Activated CD8-positive, alpha-beta memory T cell treated with anti-CD3 and anti-CD28 coated beads, Interleukin-2, amount 10 ng/mL, durations not matched to agents 7 days and 5 days (primary cell): ENCODE measurements at regions of chr2 and their contacts with region 1.

Region 1: DNA sequence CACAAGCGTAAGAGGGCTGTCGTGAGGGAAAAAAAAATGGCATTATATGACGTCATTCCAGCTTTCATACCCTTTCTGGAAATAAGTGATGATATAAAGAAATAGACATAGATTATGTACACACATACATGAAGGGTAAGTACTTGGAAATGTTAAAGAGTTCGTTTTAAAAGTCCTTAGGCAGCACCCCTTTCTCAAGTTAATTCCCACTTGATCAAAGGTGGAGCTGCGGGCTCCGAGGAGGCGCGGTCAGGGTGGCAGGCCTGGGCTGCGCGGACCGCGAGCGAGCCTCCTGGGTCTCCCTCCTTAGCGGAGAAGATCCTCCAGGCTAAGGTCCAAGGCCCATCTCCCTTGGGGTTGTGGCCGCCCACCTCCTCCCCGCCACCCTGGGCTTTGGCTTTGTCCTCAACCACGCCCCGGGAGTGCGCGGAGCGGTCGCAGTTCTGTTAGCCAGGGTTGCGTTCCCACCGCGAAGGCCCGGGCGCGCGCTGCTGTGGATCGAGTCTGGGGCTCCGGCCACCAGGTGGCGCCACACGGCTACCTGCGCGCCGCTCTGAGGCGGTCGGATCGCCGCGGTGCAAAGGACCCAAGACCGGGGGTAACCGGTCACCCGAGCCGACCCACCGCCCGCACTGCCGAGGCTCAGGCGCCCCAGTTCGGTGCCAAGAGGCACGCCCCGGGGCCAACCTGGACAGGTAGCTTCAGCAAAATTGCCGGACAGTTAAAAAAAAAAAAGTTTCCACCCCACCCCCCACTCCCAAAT is 66.8 kb downstream of the HNRNPLL start:
- DNase-seq: peak; percentile 83
- ATAC-seq: peak; percentile 99
- H3K4me3 Mint-ChIP-seq: peak overlapping the region; percentile 38
- H3K27ac Mint-ChIP-seq: no peak overlapping the region
- H3K4me1 Mint-ChIP-seq: peaks cover 5% of the 10 kb centered on the region
- H3K27me3 Mint-ChIP-seq: peaks cover 16% of the 10 kb centered on the region

Region 2: DNA sequence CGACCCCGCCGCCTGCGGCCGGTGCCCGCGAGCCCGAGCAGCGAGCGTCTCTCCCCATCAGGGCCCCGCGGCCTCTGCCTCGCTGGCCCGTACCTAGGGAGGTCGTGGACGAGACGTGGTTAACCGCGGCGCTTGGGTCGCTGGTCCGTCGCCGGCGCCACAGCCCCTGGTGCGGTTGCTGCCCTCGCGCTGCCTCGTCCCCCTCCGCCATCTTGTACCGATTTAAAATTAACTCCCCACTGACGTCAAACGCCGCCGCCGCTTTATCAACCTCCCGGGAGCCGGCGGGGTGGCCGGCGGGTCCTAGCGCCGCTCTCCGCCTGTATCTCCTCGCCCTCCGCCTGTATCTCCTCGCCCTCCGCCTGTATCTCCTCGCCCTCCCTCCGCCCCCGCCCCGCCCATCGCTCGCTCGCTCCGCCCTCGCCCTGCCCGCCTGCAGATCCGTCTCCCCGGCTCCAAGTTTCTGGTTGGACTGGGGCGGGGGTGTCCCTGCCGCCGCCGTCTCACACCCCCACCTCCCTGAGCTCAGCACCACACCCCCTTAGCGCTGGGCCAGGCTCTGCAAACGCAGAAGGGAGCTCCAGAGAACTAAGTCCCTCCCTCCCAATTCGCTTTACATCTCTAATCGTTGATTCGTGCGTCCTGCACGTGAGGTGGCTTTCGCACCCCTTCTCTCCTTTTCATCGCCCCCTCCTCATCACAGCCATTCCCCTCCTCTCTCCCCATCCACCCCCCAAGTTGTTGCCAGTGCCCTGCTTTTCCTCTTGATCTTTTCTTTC is 158.7 kb before region 1 on chr2 and contains the start of gene ATL2:
- CTCF ChIA-PET with region 1: no interaction called
- DNase-seq: peak; percentile 97
- ATAC-seq: peak; percentile 92
- H3K4me3 Mint-ChIP-seq: peak within 1 kb of the TSS; percentile 87
- H3K27ac Mint-ChIP-seq: peak within 1 kb of the TSS; percentile 85
- H3K4me1 Mint-ChIP-seq: peaks cover 47% of the 10 kb centered on the region
- H3K27me3 Mint-ChIP-seq: peaks cover 6% of the 10 kb centered on the region
- total RNA-seq, gene ATL2: 55.5 to 56.7 TPM

Region 3: GRCh38 chr2:38549071-38549704 is 13.3 kb after region 1 on chr2:
- CTCF ChIA-PET with region 1: interaction called, 25 read pairs
- DNase-seq: no peak
- ATAC-seq: no peak
- H3K4me3 Mint-ChIP-seq: no peak overlapping the region
- H3K27ac Mint-ChIP-seq: no peak overlapping the region
- H3K4me1 Mint-ChIP-seq: peaks cover 8% of the 10 kb centered on the region
- H3K27me3 Mint-ChIP-seq: no peaks in the 10 kb centered on the region

Region 4: GRCh38 chr2:38554973-38555595 is 19.2 kb after region 1 on chr2:
- CTCF ChIA-PET with region 1: interaction called, 25 read pairs
- DNase-seq: no peak
- ATAC-seq: peak; percentile 42
- H3K4me3 Mint-ChIP-seq: no peak overlapping the region
- H3K27ac Mint-ChIP-seq: no peak overlapping the region
- H3K4me1 Mint-ChIP-seq: peaks cover 3% of the 10 kb centered on the region
- H3K27me3 Mint-ChIP-seq: no peaks in the 10 kb centered on the region

Region 5: GRCh38 chr2:38561691-38562090 is 25.8 kb after region 1 on chr2:
- CTCF ChIA-PET with region 1: interaction called, 25 read pairs
- DNase-seq: no peak
- ATAC-seq: no peak
- H3K4me3 Mint-ChIP-seq: no peak overlapping the region
- H3K27ac Mint-ChIP-seq: no peak overlapping the region
- H3K4me1 Mint-ChIP-seq: no peaks in the 10 kb centered on the region
- H3K27me3 Mint-ChIP-seq: no peaks in the 10 kb centered on the region

Region 6: GRCh38 chr2:38581193-38582147 is 45.5 kb after region 1 on chr2:
- CTCF ChIA-PET with region 1: interaction called, 13 read pairs
- DNase-seq: no peak
- ATAC-seq: peak; percentile 86
- H3K4me3 Mint-ChIP-seq: no peak overlapping the region
- H3K27ac Mint-ChIP-seq: peak overlapping the region; percentile 9
- H3K4me1 Mint-ChIP-seq: peaks cover 31% of the 10 kb centered on the region
- H3K27me3 Mint-ChIP-seq: no peaks in the 10 kb centered on the region

Region 7: DNA sequence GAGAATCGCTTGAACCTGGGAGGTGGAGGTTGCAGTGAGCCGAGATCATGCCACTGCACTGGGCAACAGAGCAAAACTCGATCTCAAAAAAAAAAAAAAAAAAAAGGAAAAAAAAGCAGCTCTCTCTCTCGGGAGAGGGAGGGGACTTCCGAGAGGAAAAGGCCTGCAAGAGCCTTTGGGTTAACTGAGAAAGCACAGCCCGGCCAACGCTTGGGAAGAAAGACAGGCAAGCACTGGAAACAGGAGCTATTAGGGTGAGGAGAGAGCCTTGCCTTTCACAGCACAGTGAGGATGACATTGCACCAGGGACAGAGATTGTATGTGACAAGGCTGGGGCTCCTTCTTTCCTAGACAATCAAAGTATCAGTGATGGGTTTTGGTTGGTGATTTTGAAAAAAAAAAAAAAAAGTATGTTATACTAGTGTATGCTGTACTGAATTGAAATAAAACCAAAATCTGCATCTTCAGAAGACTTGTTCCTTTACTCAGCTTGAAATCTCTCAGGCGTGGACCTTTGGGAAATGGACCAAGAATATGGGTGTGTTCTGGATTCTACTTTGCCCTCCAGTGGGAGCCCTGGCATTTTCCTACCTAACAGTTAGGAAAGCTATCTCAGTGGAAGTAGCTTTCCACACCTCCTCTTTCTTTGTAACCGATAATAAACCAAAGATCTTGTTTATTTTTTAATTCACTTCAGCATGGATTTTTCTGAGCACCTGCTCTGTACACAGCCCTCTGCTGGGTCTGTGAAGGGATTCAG is 198.6 kb after region 1 on chr2:
- CTCF ChIA-PET with region 1: interaction called, 13 read pairs
- DNase-seq: no peak
- ATAC-seq: no peak
- H3K4me3 Mint-ChIP-seq: no peak overlapping the region
- H3K27ac Mint-ChIP-seq: peak overlapping the region; percentile 63
- H3K4me1 Mint-ChIP-seq: peaks cover 3% of the 10 kb centered on the region
- H3K27me3 Mint-ChIP-seq: no peaks in the 10 kb centered on the region

Region 8: DNA sequence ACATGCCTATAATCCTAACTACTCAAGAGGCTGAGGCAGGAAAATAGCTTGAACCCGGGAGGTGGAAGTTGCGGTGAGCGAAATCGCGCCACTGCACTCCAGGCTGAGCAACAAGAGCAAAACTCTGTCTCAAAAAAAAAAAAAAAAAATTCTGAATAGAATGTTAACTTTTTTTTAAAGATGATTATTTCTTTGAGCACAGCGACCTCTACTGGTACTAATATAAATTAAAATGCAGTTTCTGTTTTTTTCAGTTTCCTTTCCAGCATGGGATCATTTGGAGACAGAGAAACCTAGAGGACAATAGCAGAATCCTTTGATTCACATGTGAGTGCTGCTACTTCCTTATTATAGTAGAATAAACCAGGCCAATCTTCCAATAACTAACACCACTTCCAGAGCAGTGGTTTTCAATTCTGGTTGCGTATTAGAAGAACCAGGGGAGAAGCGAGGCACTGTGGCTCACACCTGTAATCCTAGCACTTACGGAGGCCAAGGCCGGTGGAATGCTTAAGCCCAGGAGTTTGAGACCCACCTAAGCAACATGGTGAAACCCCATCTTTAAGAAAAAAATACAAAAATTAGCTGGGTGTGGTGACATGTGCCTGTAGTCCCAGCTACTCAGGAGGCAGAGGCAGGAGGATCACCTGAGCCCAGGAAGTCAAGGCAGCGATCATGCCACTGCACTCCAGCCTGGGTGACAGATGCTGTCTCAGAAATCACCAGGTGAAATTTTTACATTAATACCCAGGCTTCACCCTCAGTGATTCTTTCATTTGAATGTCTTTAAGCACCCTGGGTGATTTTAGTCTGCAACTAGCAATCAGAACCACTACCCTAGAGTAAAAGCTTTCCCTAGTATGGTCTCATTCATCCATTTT is 205.2 kb after region 1 on chr2:
- CTCF ChIA-PET with region 1: interaction called, 33 read pairs
- DNase-seq: no peak
- ATAC-seq: peak; percentile 13
- H3K4me3 Mint-ChIP-seq: no peak overlapping the region
- H3K27ac Mint-ChIP-seq: peak overlapping the region; percentile 72
- H3K4me1 Mint-ChIP-seq: peaks cover 54% of the 10 kb centered on the region
- H3K27me3 Mint-ChIP-seq: no peaks in the 10 kb centered on the region

Region 9: DNA sequence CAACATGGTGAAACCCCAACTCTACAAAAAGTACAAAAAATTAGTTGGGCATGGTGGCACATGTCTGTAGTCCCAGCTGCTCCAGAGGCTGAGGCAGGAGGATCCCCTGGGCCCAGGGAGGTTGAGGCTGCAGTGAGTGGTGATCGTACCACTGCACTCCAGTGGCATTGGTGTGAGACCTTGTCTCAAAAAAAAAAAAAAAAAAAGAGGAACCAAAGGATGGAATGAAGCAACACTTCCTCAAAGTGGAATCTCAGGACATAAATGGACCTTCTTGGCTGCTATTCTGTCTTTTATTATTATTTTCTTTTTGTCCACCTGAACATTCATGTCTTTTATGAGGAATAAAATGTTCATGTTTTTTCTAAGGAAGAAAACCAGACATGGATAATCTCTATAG is 255.8 kb after region 1 on chr2:
- CTCF ChIA-PET with region 1: no interaction called
- DNase-seq: no peak
- ATAC-seq: no peak
- H3K4me3 Mint-ChIP-seq: no peak overlapping the region
- H3K27ac Mint-ChIP-seq: no peak overlapping the region
- H3K4me1 Mint-ChIP-seq: no peaks in the 10 kb centered on the region
- H3K27me3 Mint-ChIP-seq: no peaks in the 10 kb centered on the region